Heart right ventricle (tissue), 16 donors: ENCODE measurements at regions of chr6 and their contacts with region 1.

Region 1: GRCh38 chr6:4941782-4942672 is 61.8 kb downstream of the RPP40 start:
- DNase-seq: peak in 1 of 2 donors; percentile 25
- ATAC-seq: peak; percentile 37 to 88 (median 82)
- H3K4me3 ChIP-seq: no peak overlapping the region
- H3K27ac ChIP-seq: peak overlapping the region in 5 of 10 donors; percentile 3 to 53 (median 23)
- H3K4me1 ChIP-seq: peaks cover 9 to 27% (median 15%) of the 10 kb centered on the region in 9 donors
- H3K27me3 ChIP-seq: no peaks in the 10 kb centered on the region
- CTCF ChIP-seq: no peak

Region 2: GRCh38 chr6:4169028-4169789 is 772.8 kb before region 1 on chr6:
- intact Hi-C with region 1: no loop called
- DNase-seq: no peak
- ATAC-seq: no peak
- H3K4me3 ChIP-seq: no peak overlapping the region
- H3K27ac ChIP-seq: no peak overlapping the region
- H3K4me1 ChIP-seq: peaks cover 0 to 1% (median 0%) of the 10 kb centered on the region in 9 donors
- H3K27me3 ChIP-seq: no peaks in the 10 kb centered on the region
- CTCF ChIP-seq: no peak

Region 3: GRCh38 chr6:4313044-4313686 is 628.9 kb before region 1 on chr6:
- intact Hi-C with region 1: loop called in 8 of 10 experiments (anchors 2 to 10 kb)
- DNase-seq: peak in 1 of 2 donors; percentile 36
- ATAC-seq: peak; percentile 35 to 75 (median 61)
- H3K4me3 ChIP-seq: no peak overlapping the region
- H3K27ac ChIP-seq: peak overlapping the region in 6 of 10 donors; percentile 6 to 57 (median 32)
- H3K4me1 ChIP-seq: peaks cover 3 to 29% (median 20%) of the 10 kb centered on the region in 9 donors
- H3K27me3 ChIP-seq: no peaks in the 10 kb centered on the region
- CTCF ChIP-seq: peak; percentile 13 to 60 (median 48)